ENCODE measurements at regions of chr4 and their contacts with region 1.

Region 1: DNA sequence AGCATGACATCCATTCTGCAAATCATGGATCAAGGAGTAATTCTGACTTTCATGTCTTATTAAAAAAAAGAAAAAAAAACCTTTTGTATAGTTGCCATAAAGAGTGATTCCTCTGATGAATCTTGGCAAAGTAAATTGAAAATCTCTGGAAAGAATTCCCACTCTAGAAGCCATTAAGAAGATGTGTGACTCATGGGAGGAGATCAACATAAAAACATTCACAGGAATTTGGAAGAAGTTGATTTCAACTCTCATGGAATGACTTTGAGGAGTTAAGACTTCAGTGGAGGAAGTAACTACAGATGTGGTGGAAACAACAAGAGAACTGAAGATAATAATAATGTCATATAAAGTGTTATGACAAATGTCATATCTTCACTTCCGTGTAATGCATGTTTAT is 204.2 kb downstream of the PABPC4L start:
- DNase-seq: no peak
- H3K4me3 ChIP-seq: no peak overlapping the region
- H3K4me3 Mint-ChIP-seq: no peak overlapping the region
- H3K27ac Mint-ChIP-seq: peak overlapping the region; percentile 95
- H3K4me1 ChIP-seq: peaks cover 33% of the 10 kb centered on the region
- H3K4me1 Mint-ChIP-seq: peaks cover 11% of the 10 kb centered on the region
- H3K27me3 ChIP-seq: no peaks in the 10 kb centered on the region
- H3K27me3 Mint-ChIP-seq: no peaks in the 10 kb centered on the region
- CTCF ChIP-seq: no peak

Region 2: DNA sequence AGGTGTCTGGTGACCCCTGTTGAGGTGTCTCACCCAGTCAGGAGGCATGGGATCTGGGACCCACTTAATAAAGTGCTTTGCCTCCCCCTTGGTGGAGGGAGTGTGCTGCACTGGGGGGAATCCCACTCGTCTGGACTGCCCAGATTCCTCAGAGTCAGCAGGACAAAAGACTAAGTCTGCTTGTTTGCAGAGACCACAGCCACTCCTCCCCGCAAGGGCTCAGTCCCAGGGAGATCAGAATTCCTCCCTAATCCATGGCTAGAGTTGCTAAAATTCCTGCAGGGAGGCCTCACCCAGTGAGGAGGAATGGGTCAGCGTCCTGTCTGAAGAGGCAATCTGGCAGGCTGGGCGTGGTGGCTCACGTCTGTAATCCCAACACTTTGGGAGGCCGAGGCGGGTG is 238.0 kb before region 1 on chr4:
- CTCF ChIA-PET with region 1: no interaction called
- POLR2A ChIA-PET with region 1: no interaction called
- intact Hi-C with region 1: loop called (anchors 10 kb)
- DNase-seq: peak; percentile 68 to 72
- H3K4me3 ChIP-seq: no peak overlapping the region
- H3K4me3 Mint-ChIP-seq: no peak overlapping the region
- H3K27ac Mint-ChIP-seq: peak overlapping the region; percentile 69
- H3K4me1 ChIP-seq: peaks cover 15% of the 10 kb centered on the region
- H3K4me1 Mint-ChIP-seq: peaks cover 9% of the 10 kb centered on the region
- H3K27me3 ChIP-seq: no peaks in the 10 kb centered on the region
- H3K27me3 Mint-ChIP-seq: no peaks in the 10 kb centered on the region
- CTCF ChIP-seq: no peak

Region 3: GRCh38 chr4:134018846-134019245 is 21.4 kb after region 1 on chr4:
- CTCF ChIA-PET with region 1: no interaction called
- POLR2A ChIA-PET with region 1: no interaction called
- intact Hi-C with region 1: no loop called
- DNase-seq: no peak
- H3K4me3 ChIP-seq: no peak overlapping the region
- H3K4me3 Mint-ChIP-seq: no peak overlapping the region
- H3K27ac Mint-ChIP-seq: no peak overlapping the region
- H3K4me1 ChIP-seq: no peaks in the 10 kb centered on the region
- H3K4me1 Mint-ChIP-seq: peaks cover 4% of the 10 kb centered on the region
- H3K27me3 ChIP-seq: no peaks in the 10 kb centered on the region
- H3K27me3 Mint-ChIP-seq: no peaks in the 10 kb centered on the region
- CTCF ChIP-seq: no peak

Region 4: GRCh38 chr4:134043266-134043665 is 45.8 kb after region 1 on chr4:
- CTCF ChIA-PET with region 1: interaction called, 3 read pairs
- POLR2A ChIA-PET with region 1: no interaction called
- intact Hi-C with region 1: loop called (anchors 1 kb)
- DNase-seq: no peak
- H3K4me3 ChIP-seq: no peak overlapping the region
- H3K4me3 Mint-ChIP-seq: no peak overlapping the region
- H3K27ac Mint-ChIP-seq: no peak overlapping the region
- H3K4me1 ChIP-seq: peaks cover 6% of the 10 kb centered on the region
- H3K4me1 Mint-ChIP-seq: peaks cover 16% of the 10 kb centered on the region
- H3K27me3 ChIP-seq: no peaks in the 10 kb centered on the region
- H3K27me3 Mint-ChIP-seq: no peaks in the 10 kb centered on the region
- CTCF ChIP-seq: no peak

Region 5: GRCh38 chr4:134057356-134057755 is 59.9 kb after region 1 on chr4:
- CTCF ChIA-PET with region 1: no interaction called
- POLR2A ChIA-PET with region 1: no interaction called
- intact Hi-C with region 1: no loop called
- DNase-seq: no peak
- H3K4me3 ChIP-seq: no peak overlapping the region
- H3K4me3 Mint-ChIP-seq: no peak overlapping the region
- H3K27ac Mint-ChIP-seq: no peak overlapping the region
- H3K4me1 ChIP-seq: no peaks in the 10 kb centered on the region
- H3K4me1 Mint-ChIP-seq: no peaks in the 10 kb centered on the region
- H3K27me3 ChIP-seq: no peaks in the 10 kb centered on the region
- H3K27me3 Mint-ChIP-seq: no peaks in the 10 kb centered on the region
- CTCF ChIP-seq: no peak

Region 6: GRCh38 chr4:134747108-134747805 is 749.8 kb after region 1 on chr4:
- CTCF ChIA-PET with region 1: no interaction called
- POLR2A ChIA-PET with region 1: no interaction called
- intact Hi-C with region 1: loop called (anchors 2 kb)
- DNase-seq: peak; percentile 63 to 79
- H3K4me3 ChIP-seq: no peak overlapping the region
- H3K4me3 Mint-ChIP-seq: peak overlapping the region; percentile 55
- H3K27ac Mint-ChIP-seq: peak overlapping the region; percentile 85
- H3K4me1 ChIP-seq: peaks cover 26% of the 10 kb centered on the region
- H3K4me1 Mint-ChIP-seq: peaks cover 20% of the 10 kb centered on the region
- H3K27me3 ChIP-seq: no peaks in the 10 kb centered on the region
- H3K27me3 Mint-ChIP-seq: no peaks in the 10 kb centered on the region
- CTCF ChIP-seq: no peak

Measured in Caco-2 (cell line).